ENCODE measurements at regions of chr5 and their contacts with region 1.

Region 1: DNA sequence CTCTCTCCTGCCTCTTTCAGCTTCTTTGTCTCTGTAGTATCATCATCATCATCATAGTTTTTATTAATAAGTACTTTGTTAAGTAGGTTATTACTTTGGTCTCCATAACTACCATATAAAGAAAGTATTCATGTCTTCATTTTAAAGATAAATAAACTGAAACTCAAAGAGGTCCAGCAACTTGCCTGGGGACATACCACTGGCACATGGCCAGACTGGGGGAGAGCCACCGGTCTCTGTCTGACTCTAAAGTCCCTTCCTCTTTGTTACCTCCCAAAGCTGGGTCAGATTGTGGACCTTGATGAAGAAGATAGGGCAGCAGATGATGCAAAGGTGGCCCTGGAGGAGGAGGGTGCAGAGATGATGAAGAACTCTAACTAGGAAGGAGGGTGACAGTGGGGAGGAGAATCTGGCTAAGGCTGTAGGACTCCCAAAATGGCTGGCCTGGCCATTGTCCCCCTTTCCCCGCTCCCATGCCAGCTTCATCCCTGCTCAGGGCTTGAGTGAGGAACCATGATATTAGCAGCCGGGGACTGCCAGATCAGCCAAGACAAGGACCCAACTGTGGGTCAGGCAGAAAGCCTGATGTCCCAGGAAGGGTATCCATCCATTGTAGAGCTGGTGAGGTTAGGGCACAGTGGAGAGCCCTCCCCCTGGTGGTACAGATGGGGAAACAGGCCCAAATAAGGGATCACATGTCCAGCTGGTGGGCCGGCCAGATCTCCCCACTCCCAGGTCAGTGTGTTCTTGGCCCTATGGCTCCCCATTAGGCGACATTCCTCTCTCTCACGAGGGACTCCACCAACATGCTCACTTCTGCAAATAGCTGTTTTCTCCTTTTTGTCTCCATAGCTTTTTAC is 8.7 kb downstream of the CDX1 start:
- DNase-seq: peak; percentile 34
- H3K4me3 ChIP-seq: no peak overlapping the region
- H3K27ac ChIP-seq: no peak overlapping the region
- H3K4me1 ChIP-seq: no peaks in the 10 kb centered on the region
- H3K27me3 ChIP-seq: peaks cover 7 to 11% of the 10 kb centered on the region in 2 experiments
- CTCF ChIP-seq: peak; percentile 48 to 77
- POLR2A ChIP-seq: no peak

Region 2: DNA sequence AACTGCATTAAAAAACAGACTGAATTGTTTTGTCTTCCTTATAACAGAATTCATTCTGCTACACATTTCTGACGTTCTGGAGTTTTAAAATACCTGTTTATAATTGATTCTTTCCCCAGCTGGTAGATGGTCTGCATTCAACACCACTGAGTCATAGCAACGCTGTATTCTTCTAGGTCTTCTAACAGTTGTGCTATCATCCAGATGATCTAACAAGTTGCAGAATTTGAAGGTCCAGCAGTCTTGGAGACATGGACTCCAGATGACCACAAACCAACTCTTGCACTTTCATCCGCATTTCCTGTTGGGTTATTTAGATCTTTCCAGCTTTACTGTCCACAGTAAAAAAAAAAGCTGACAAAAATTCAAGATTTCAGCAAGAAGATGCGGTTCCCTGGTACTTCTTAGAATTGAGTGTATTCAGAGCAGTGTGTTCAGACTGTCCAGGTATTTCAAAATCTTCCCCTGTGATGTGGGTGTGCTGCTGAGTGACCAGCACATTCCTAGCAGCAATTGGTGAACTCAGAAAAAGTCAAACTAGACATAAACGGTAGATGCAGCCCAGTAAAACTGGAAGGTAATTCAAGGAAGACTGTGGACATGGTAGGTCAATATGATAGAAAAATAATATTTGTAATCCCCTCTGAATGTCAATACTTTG is 674.3 kb before region 1 on chr5:
- CTCF ChIA-PET with region 1: no interaction called
- POLR2A ChIA-PET with region 1: no interaction called
- dilution Hi-C with region 1: no loop called
- intact Hi-C with region 1: no loop called
- DNase-seq: no peak
- H3K4me3 ChIP-seq: no peak overlapping the region
- H3K27ac ChIP-seq: no peak overlapping the region
- H3K4me1 ChIP-seq: no peaks in the 10 kb centered on the region
- H3K27me3 ChIP-seq: no peaks in the 10 kb centered on the region
- CTCF ChIP-seq: no peak
- POLR2A ChIP-seq: no peak

Region 3: GRCh38 chr5:149834246-149834855 is 341.0 kb before region 1 on chr5:
- CTCF ChIA-PET with region 1: interaction called, 15 read pairs
- POLR2A ChIA-PET with region 1: no interaction called
- dilution Hi-C with region 1: no loop called
- intact Hi-C with region 1: no loop called
- DNase-seq: peak; percentile 86
- H3K4me3 ChIP-seq: no peak overlapping the region
- H3K27ac ChIP-seq: no peak overlapping the region
- H3K4me1 ChIP-seq: peaks cover 1% of the 10 kb centered on the region
- H3K27me3 ChIP-seq: no peaks in the 10 kb centered on the region
- CTCF ChIP-seq: peak; percentile 79 to 80
- POLR2A ChIP-seq: no peak

Region 4: GRCh38 chr5:149902177-149902576 is 273.1 kb before region 1 on chr5:
- CTCF ChIA-PET with region 1: no interaction called
- POLR2A ChIA-PET with region 1: no interaction called
- dilution Hi-C with region 1: no loop called
- intact Hi-C with region 1: no loop called
- DNase-seq: peak; percentile 19
- H3K4me3 ChIP-seq: no peak overlapping the region
- H3K27ac ChIP-seq: no peak overlapping the region
- H3K4me1 ChIP-seq: peaks cover 9% of the 10 kb centered on the region
- H3K27me3 ChIP-seq: no peaks in the 10 kb centered on the region
- CTCF ChIP-seq: peak in 1 of 2 donors; percentile 27
- POLR2A ChIP-seq: no peak

Region 5: DNA sequence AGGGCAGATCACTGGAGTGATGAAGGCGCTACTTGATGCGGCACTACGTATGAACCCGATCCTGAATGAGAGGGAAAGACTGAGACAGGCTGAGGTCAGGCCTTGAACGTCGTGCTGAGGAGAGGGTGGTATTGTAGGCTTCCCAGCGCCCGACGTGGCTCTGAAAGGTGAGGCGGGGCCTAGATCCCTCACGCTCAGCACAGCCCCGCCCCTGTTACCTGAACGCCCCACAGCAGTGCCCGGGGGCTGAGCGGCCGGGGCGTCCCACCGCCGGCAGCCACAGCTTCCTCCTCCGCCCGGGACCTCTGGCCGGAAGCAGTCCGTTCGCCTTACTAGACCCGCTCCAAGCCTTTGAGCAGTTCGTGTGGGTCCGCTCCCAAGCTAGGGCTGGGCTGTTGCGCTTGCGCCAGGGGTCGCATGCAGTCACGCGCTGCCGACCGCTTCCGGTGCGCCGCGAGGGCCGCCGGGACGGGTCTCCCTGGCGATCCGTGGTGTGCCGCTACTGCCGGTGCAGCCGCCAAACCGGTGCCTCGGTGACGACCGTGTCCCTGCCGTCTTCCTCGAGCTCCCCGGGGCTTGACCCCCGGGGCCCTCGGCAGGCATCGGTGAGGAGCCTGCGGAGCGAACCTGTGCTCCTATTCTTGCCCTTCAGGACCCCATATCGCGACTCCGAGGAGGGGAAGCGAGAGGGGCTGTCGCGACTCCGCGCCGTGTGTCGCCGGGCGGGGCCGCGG is 174.9 kb before region 1 on chr5 and contains the starts of genes HMGXB3 and TIGD6:
- CTCF ChIA-PET with region 1: no interaction called
- POLR2A ChIA-PET with region 1: no interaction called
- dilution Hi-C with region 1: no loop called
- intact Hi-C with region 1: loop called (anchors 2 kb)
- DNase-seq: peak; percentile 94
- H3K4me3 ChIP-seq: peak within 1 kb of the TSS; percentile 42 to 97 (median 86)
- H3K27ac ChIP-seq: peak within 1 kb of the TSS; percentile 72
- H3K4me1 ChIP-seq: peaks cover 23% of the 10 kb centered on the region
- H3K27me3 ChIP-seq: no peaks in the 10 kb centered on the region
- CTCF ChIP-seq: peak in 1 of 2 donors; percentile 8
- POLR2A ChIP-seq: peak; percentile 96
- total RNA-seq, gene HMGXB3: 43.0 and 52.6 TPM in 2 replicates
- total RNA-seq, gene TIGD6: 3.6 and 4.1 TPM in 2 replicates

Region 6: DNA sequence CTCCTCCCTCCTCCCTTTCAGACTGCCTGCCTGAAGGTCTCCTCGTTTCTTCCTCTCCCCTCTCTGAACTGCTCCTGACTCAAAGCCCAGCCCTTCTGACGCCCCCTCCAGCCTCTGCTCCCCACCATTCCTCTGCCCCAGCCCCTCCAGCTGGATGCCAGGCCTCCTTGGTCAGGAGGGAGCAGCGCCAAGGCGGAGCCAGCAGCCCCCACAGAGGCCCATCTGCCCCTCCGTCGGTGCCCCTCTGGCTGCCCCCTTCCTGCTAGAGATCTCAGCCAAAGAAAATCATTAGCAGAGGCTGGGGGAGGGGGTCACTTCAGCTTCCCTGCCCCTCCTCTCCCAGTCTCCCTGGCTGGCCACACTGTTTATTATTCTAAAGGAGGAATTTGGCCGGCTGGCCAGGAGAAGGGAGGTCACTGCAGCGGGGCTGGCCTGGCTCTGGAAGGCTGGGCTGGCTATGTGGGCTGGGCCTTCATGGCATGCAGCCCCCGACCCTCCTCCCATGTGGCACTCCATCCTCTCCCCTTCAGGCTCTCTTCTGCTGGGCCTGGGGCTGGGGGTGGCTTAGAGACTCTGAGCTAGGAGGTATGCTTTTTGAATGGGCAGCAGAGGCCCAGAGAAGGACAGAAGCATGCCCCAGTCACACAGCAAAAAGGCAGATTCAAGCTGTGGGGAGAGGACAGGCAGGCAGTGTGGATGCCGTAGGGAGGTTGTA is 36.6 kb before region 1 on chr5:
- CTCF ChIA-PET with region 1: interaction called, 11 read pairs
- POLR2A ChIA-PET with region 1: no interaction called
- dilution Hi-C with region 1: no loop called
- intact Hi-C with region 1: no loop called
- DNase-seq: peak; percentile 86
- H3K4me3 ChIP-seq: no peak overlapping the region
- H3K27ac ChIP-seq: no peak overlapping the region
- H3K4me1 ChIP-seq: peaks cover 29% of the 10 kb centered on the region
- H3K27me3 ChIP-seq: peaks cover 0 to 6% of the 10 kb centered on the region in 2 experiments
- CTCF ChIP-seq: no peak
- POLR2A ChIP-seq: no peak

Region 7: DNA sequence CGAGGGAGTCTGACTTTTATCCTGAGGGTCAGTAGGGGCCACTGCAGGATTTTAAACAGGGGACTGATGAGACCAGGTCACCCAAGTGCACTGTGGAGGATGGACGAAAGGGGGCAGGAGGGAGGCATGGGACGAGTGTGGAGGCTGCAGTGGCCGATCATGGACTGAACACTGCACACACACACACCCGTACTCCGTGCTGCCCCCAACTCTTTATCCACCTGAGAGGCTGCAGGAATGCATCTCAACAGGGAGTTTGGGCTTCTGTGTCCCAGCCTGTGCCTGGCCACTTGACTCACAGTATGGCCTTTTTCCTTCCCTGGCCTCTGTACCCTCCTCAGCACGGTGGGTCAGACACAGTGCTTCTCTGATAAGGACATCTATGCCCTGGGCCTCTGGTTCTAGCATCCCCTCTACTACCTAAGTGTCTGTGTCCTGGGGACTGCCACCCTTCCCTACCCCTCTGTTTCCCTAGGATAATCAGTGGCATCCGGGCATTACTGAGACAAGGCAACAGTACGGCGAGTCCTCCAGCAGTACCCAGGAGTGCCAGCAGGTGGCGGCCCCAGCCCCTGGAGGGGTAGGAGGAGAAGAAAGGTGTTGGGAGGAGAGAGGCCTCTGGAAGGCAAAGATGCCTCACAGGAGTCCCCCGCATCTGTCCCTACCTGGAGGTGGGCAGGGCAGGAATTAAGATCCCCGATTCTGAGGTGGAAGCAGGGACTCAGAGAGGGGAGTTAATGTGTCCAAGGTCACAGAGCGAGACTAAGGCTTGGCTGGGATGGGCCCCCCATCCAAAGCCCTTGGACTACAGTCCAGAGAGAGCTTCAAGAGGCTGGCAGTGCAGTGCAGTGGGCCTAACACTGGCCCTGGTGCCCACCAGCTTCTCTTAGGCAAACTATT is 13.8 kb before region 1 on chr5:
- CTCF ChIA-PET with region 1: interaction called, 8 read pairs
- POLR2A ChIA-PET with region 1: no interaction called
- dilution Hi-C with region 1: no loop called
- intact Hi-C with region 1: loop called (anchors 2 kb)
- DNase-seq: peak; percentile 59
- H3K4me3 ChIP-seq: no peak overlapping the region
- H3K27ac ChIP-seq: no peak overlapping the region
- H3K4me1 ChIP-seq: no peaks in the 10 kb centered on the region
- H3K27me3 ChIP-seq: peaks cover 6 to 7% of the 10 kb centered on the region in 2 experiments
- CTCF ChIP-seq: peak; percentile 94 to 97
- POLR2A ChIP-seq: no peak

Region 8: GRCh38 chr5:150192462-150192861 is 17.2 kb after region 1 on chr5:
- CTCF ChIA-PET with region 1: interaction called, 10 read pairs
- POLR2A ChIA-PET with region 1: no interaction called
- dilution Hi-C with region 1: no loop called
- intact Hi-C with region 1: no loop called
- DNase-seq: no peak
- H3K4me3 ChIP-seq: no peak overlapping the region
- H3K27ac ChIP-seq: no peak overlapping the region
- H3K4me1 ChIP-seq: no peaks in the 10 kb centered on the region
- H3K27me3 ChIP-seq: peaks cover 48 to 50% of the 10 kb centered on the region in 2 experiments
- CTCF ChIP-seq: no peak
- POLR2A ChIP-seq: no peak

Region 9: DNA sequence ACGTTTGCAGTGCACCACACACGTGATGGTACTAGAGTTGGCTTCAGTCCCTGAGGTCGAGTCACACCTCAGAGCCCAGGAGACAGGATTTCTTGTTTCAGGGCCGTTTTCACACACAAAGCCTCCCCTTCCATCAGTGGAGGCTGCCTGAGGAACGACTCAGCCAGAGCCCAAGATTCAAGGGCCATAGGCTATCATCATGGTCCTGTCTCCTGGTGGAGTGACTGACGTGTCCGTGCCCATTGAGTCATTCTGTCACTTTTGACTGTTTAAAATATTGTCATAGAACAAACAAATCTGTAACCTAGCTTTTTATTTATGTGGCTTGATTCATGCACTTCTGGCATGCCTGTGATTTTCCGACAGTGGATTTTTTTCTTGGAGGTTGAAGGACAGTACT is 85.9 kb after region 1 on chr5:
- CTCF ChIA-PET with region 1: no interaction called
- POLR2A ChIA-PET with region 1: no interaction called
- dilution Hi-C with region 1: no loop called
- intact Hi-C with region 1: no loop called
- DNase-seq: no peak
- H3K4me3 ChIP-seq: no peak overlapping the region
- H3K27ac ChIP-seq: no peak overlapping the region
- H3K4me1 ChIP-seq: no peaks in the 10 kb centered on the region
- H3K27me3 ChIP-seq: no peaks in the 10 kb centered on the region
- CTCF ChIP-seq: no peak
- POLR2A ChIP-seq: no peak